Activated T-helper 1 cell treated with anti-CD3 and anti-CD28 coated beads, Interleukin-12 subunit alpha, Interleukin-12 subunit beta, Interleukin-2, Interleukin-4 antibody, amounts not matched to agents 30 ng/mL and 10 ng/mL and 1 ng/mL, durations not matched to agents 14 hours and 24 hours and 36 hours (primary cell): ENCODE measurements at regions of chr4 and their contacts with region 1.

Region 1: DNA sequence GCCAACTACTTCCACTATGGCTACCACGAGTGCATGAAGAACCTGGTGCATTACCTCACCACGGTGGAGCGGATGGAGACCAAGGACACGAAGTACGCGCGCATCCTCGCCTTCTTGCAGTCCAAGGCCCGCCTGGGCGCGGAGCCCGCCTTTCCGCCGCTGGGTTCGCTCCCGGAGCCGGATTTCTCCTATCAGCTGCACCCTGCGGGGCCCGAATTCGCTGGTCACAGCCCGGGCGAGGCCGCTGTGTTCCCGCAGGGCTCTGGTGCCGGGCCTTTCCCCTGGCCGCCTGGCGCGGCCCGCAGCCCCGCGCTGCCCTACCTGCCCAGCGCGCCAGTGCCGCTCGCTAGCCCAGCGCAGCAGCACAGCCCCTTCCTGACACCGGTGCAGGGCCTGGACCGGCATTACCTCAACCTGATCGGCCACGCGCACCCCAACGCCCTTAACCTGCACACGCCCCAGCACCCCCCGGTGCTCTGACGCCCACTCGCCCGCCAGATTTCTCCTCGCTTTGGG is 2.1 kb downstream of the HELT start:
- DNase-seq: no peak
- H3K4me3 Mint-ChIP-seq: no peak overlapping the region
- H3K27ac Mint-ChIP-seq: peak overlapping the region; percentile 55
- H3K4me1 Mint-ChIP-seq: no peaks in the 10 kb centered on the region
- H3K27me3 Mint-ChIP-seq: peaks cover 88% of the 10 kb centered on the region

Region 2: GRCh38 chr4:183797445-183798300 is 1222.7 kb before region 1 on chr4:
- intact Hi-C with region 1: loop called (anchors 5 kb)
- DNase-seq: no peak
- H3K4me3 Mint-ChIP-seq: no peak overlapping the region
- H3K27ac Mint-ChIP-seq: no peak overlapping the region
- H3K4me1 Mint-ChIP-seq: peaks cover 12% of the 10 kb centered on the region
- H3K27me3 Mint-ChIP-seq: peaks cover 52% of the 10 kb centered on the region

Region 3: GRCh38 chr4:183905081-183905592 is 1115.2 kb before region 1 on chr4 and contains the start of gene STOX2:
- intact Hi-C with region 1: loop called (anchors 2 kb)
- DNase-seq: no peak
- H3K4me3 Mint-ChIP-seq: no peak within 1 kb of the TSS
- H3K27ac Mint-ChIP-seq: no peak within 1 kb of the TSS
- H3K4me1 Mint-ChIP-seq: no peaks in the 10 kb centered on the region
- H3K27me3 Mint-ChIP-seq: peaks cover 67% of the 10 kb centered on the region
- total RNA-seq, gene STOX2: not detected in 2 replicates

Region 4: DNA sequence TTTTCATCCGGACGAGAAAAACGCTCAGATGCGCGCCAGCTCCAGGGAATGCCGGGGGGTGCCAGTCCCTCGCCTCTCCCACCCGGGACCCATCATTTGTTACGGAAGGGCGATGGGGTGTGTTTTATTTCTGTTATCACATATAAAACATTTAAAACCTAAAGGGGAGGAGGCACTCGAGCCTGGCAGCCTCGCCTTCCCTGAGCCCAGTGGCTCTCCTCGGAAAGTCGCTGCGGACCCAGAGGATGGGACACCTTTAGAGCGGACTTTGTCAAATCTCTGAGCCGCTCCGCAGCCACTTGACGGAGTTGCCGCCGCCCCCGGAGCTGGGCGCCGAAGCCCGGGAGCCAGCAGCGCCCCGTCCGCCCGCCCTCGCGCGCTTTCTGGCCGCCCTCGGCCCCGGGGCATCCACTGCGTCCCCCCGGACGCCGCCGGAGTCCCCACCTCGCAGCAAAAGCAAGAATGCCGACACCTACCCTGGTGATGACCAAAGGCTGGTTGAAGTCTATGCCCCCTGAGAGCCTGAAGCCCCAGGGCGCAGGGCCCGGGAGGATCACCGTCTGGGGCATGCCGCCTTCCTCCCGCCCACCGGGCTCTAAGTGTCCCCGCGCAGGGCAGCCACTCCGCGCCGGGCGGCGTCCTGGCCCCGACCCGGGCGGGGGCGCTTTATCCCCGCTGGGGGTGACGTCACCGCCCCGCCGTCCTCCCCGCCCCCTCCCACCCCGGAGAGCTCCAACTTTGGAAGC is 514.7 kb after region 1 on chr4 and contains the start of gene PDLIM3:
- intact Hi-C with region 1: loop called (anchors 5 kb)
- DNase-seq: no peak
- H3K4me3 Mint-ChIP-seq: peak within 1 kb of the TSS; percentile 43
- H3K27ac Mint-ChIP-seq: no peak within 1 kb of the TSS
- H3K4me1 Mint-ChIP-seq: no peaks in the 10 kb centered on the region
- H3K27me3 Mint-ChIP-seq: peaks cover 43% of the 10 kb centered on the region
- total RNA-seq, gene PDLIM3: not detected in 2 replicates

Region 5: GRCh38 chr4:186725469-186726425 is 1705.4 kb after region 1 on chr4:
- intact Hi-C with region 1: loop called (anchors 10 kb)
- DNase-seq: no peak
- H3K4me3 Mint-ChIP-seq: no peak overlapping the region
- H3K27ac Mint-ChIP-seq: no peak overlapping the region
- H3K4me1 Mint-ChIP-seq: no peaks in the 10 kb centered on the region
- H3K27me3 Mint-ChIP-seq: peaks cover 46% of the 10 kb centered on the region